Mammary epithelial cell (primary cell): ENCODE measurements at regions of chr14 and their contacts with region 1.

Region 1: GRCh38 chr14:100533656-100534485 is 53.3 kb downstream of the BEGAIN start:
- DNase-seq: no peak
- H3K4me3 ChIP-seq: no peak overlapping the region
- H3K27ac ChIP-seq: no peak overlapping the region
- H3K4me1 ChIP-seq: peaks cover 25% of the 10 kb centered on the region
- H3K27me3 ChIP-seq: no peaks in the 10 kb centered on the region
- CTCF ChIP-seq: no peak

Region 2: GRCh38 chr14:100428727-100429126 is 105.1 kb before region 1 on chr14:
- CTCF ChIA-PET with region 1: no interaction called
- dilution Hi-C with region 1: no loop called
- in situ Hi-C with region 1: no loop called
- intact Hi-C with region 1: no loop called
- DNase-seq: no peak
- H3K4me3 ChIP-seq: no peak overlapping the region
- H3K27ac ChIP-seq: no peak overlapping the region
- H3K4me1 ChIP-seq: peaks cover 17% of the 10 kb centered on the region
- H3K27me3 ChIP-seq: no peaks in the 10 kb centered on the region
- CTCF ChIP-seq: no peak

Region 3: DNA sequence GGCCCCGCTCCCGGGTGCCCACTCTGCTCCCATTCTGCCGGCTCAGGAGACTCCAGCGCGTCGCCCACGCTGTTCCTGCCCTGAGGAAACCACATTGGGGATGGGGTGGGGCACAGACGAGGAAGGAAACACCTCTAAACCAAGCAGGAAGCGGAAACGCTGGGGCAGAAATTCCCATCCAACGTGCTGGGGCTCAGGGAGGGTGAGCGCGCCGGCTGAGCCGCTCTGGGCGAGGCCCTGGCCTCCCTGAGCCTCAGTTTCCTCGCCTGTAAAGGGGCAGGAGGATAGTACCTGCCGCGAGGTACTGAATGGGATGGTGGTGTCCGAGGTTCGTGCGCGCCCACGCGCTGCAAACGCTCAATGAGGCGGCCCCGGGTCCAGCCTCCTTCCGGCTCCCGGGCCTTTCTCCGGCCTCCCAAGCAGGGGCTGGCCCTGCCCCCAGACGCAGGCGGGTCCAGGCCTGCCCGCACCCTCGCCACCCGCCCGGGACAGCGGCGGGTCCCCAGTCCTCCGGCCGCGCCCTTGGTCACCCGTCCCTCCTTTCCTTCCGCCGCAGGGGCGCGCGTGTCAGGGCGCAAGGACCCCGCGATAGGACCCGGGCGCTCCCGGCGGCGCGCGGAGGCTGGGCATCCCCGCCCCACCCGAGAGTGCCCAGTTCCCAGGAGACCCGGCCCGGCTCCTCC is 52.7 kb after region 1 on chr14:
- CTCF ChIA-PET with region 1: no interaction called
- dilution Hi-C with region 1: no loop called
- in situ Hi-C with region 1: no loop called
- intact Hi-C with region 1: loop called (anchors 2 kb)
- DNase-seq: peak; percentile 75
- H3K4me3 ChIP-seq: peak overlapping the region; percentile 48 to 65 (median 60)
- H3K27ac ChIP-seq: peak overlapping the region; percentile 13
- H3K4me1 ChIP-seq: peaks cover 9% of the 10 kb centered on the region
- H3K27me3 ChIP-seq: no peaks in the 10 kb centered on the region
- CTCF ChIP-seq: no peak

Region 4: GRCh38 chr14:100965296-100965695 is 431.4 kb after region 1 on chr14:
- CTCF ChIA-PET with region 1: no interaction called
- dilution Hi-C with region 1: no loop called
- in situ Hi-C with region 1: no loop called
- intact Hi-C with region 1: no loop called
- DNase-seq: peak; percentile 47
- H3K4me3 ChIP-seq: no peak overlapping the region
- H3K27ac ChIP-seq: no peak overlapping the region
- H3K4me1 ChIP-seq: no peaks in the 10 kb centered on the region
- H3K27me3 ChIP-seq: no peaks in the 10 kb centered on the region
- CTCF ChIP-seq: no peak